OCI-LY7 (cell line): ENCODE measurements at regions of chr12 and their contacts with region 1.

Region 1: GRCh38 chr12:71754461-71755145 is at the start of gene RAB21:
- DNase-seq: peak; percentile 98
- H3K4me3 ChIP-seq: peak within 1 kb of the TSS; percentile 96
- H3K27ac ChIP-seq: peak within 1 kb of the TSS; percentile 66
- H3K4me1 ChIP-seq: peaks cover 22% of the 10 kb centered on the region
- CTCF ChIP-seq: no peak; the same call in 1 of the 2 replicates
- total RNA-seq, gene RAB21: 11.7 and 18.2 TPM in 2 replicates

Region 2: GRCh38 chr12:71581206-71581605 is 173.4 kb before region 1 on chr12:
- CTCF ChIA-PET with region 1: no interaction called
- POLR2A ChIA-PET with region 1: no interaction called
- intact Hi-C with region 1: no loop called
- DNase-seq: no peak
- H3K4me3 ChIP-seq: no peak overlapping the region
- H3K27ac ChIP-seq: no peak overlapping the region
- H3K4me1 ChIP-seq: no peaks in the 10 kb centered on the region
- CTCF ChIP-seq: no peak

Region 3: DNA sequence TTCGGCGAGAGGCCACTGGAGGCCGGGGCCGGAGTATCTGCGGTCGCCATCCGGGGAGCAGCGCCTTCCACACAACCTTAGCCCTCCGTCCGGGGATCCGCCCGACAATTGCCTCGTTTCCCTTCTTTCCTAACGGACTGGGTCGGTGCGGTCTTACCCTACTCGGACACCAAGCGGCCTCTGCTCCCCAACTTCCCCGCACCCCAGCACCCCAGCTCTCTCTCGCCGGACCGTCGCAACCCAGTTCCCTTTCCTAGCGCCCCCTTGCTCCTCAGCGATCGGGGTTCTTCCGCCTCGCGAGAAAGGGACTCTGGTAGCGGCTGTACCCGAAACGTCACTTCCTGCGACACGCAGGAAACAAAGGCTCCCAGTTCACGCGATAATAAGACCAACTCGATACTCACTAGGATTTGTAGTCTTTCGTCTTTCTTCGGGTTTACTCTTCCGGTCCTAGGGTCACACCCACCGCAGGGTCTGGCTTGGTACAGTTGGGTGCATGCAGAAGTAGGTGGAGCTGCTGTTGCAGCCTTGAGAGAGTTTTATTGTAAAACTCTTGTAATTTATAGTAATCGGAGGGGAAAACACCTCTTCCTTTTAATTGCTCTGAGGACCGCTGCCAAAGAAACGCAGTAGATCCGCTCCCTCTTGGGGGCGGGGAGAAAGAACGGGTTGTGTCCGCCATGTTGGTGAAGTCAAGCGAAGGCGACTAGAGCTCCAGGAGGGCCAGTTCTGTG is 90.9 kb before region 1 on chr12 and contains the start of gene ZFC3H1:
- CTCF ChIA-PET with region 1: interaction called, 4 read pairs
- POLR2A ChIA-PET with region 1: interaction called, 9 read pairs
- intact Hi-C with region 1: loop called (anchors 2 kb)
- DNase-seq: peak; percentile 99
- H3K4me3 ChIP-seq: peak within 1 kb of the TSS; percentile 84
- H3K27ac ChIP-seq: peak within 1 kb of the TSS; percentile 87
- H3K4me1 ChIP-seq: peaks cover 31% of the 10 kb centered on the region
- CTCF ChIP-seq: peak; percentile 65
- total RNA-seq, gene ZFC3H1: 31.1 and 45.8 TPM in 2 replicates

Region 4: DNA sequence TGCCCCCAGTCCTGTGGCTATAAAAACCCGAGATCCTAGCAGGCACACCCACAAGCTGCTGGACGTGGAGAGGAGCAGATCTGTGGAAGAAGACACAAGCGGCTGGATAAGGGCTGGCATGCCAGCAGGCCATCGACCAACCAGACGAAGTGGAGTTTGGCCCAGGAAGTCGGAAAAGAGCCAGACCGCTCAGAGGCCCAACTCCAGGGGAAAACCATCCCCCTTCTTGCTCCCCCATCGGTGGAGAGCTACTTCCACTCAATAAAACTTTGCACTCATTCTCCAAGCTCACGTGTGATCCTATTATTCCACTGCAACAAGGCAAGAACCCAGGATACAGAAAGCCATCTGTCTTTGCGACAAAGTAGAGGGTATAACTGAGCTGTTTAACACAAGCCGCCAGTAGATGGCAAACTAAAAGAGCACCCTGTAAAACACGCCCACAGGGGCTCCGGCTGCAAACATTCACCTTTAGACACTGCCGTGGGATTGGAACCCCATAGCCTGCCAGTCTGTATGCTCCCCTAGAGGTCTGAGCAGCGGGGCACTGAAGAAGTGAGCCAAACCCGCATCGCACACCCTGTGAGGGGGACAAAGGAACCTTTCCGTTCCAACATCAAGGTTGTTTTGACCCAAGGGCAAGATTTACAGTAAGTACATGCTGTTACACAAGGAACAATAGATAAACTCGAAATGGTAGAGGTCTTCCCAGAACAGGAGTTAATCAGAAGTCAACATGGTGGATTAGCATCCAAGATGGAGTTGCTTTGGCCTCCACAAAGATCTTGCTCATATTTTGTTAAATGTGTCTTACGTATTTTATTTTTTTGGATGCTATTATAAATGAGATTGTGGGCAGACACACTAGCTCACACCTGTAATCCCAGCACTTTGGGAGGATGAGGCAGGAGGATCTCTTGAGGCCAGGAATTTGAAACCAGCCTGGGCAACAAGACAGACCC is 22.6 kb before region 1 on chr12:
- CTCF ChIA-PET with region 1: no interaction called
- POLR2A ChIA-PET with region 1: interaction called, 11 read pairs
- intact Hi-C with region 1: no loop called
- DNase-seq: peak; percentile 80
- H3K4me3 ChIP-seq: peak overlapping the region; percentile 16
- H3K27ac ChIP-seq: no peak overlapping the region
- H3K4me1 ChIP-seq: peaks cover 17% of the 10 kb centered on the region
- CTCF ChIP-seq: peak; percentile 77